ENCODE measurements at regions of chr1 and their contacts with region 1.

Region 1: DNA sequence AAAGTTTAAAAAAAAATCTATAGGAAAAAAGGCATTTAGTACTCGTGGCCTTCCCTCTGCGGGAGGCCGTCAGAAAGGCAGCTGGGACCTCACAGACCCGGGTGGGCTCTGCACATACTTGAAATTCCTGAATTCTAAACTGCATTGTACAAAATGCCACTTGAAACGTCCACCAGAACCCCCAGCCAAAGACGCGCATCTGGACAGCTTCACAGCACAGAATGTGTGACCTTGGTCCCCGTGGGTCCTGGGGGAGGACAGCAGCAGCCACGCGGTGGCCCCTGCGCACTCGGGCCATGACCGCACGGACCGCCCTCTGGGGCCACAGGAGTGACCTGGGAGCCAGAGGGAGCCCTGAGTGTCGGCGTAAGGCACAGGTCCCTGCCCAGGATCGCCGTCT is 20.6 kb upstream of the MRPS14 start:
- DNase-seq: no peak

Region 2: GRCh38 chr1:175146529-175147213 is 102.8 kb after region 1 on chr1:
- in situ Hi-C with region 1: loop called (anchors 25 kb)
- DNase-seq: peak; percentile 81

Region 3: GRCh38 chr1:175208773-175209492 is 165.1 kb after region 1 on chr1:
- in situ Hi-C with region 1: no loop called
- DNase-seq: peak; percentile 86

Region 4: GRCh38 chr1:175287377-175287776 is 243.6 kb after region 1 on chr1:
- in situ Hi-C with region 1: no loop called
- DNase-seq: no peak